Activated CD4-positive, alpha-beta memory T cell treated with anti-CD3 and anti-CD28 coated beads for 36 hours (primary cell): ENCODE measurements at regions of chr10 and their contacts with region 1.

Region 1: GRCh38 chr10:11009471-11010308 is 8.0 kb upstream of the CELF2 start:
- DNase-seq: peak; percentile 28
- H3K4me3 Mint-ChIP-seq: no peak overlapping the region
- H3K27ac Mint-ChIP-seq: no peak overlapping the region
- H3K4me1 Mint-ChIP-seq: peaks cover 17% of the 10 kb centered on the region
- H3K27me3 Mint-ChIP-seq: peaks cover 73% of the 10 kb centered on the region

Region 2: DNA sequence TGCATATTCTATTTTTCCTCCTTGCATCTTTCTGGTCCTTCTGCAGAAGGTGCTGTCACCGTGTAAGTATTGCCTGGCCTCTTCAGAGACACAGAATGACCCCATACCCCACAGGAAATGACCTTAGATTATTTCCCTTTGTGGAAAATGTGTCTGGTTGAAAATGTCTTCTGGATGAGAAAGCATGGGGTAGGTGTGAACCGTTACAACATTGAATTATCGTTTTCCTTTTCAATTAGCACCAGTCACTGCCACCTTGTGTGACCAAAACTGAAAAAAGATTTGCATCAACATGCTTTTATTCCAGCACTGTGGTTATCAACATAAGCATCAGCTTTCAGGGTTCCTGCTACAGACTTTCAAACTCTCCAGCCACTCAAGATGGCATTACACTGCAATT is 50.0 kb before region 1 on chr10:
- CTCF ChIA-PET with region 1: no interaction called
- POLR2A ChIA-PET with region 1: no interaction called
- intact Hi-C with region 1: loop called (anchors 5 kb)
- DNase-seq: no peak
- H3K4me3 Mint-ChIP-seq: no peak overlapping the region
- H3K27ac Mint-ChIP-seq: no peak overlapping the region
- H3K4me1 Mint-ChIP-seq: peaks cover 7% of the 10 kb centered on the region
- H3K27me3 Mint-ChIP-seq: peaks cover 12% of the 10 kb centered on the region